ENCODE measurements at regions of chr5 and their contacts with region 1.

Region 1: GRCh38 chr5:35822511-35822910 is 34.2 kb upstream of the IL7R start:
- DNase-seq: peak; percentile 82
- ATAC-seq: peak; percentile 28
- H3K4me3 Mint-ChIP-seq: peak overlapping the region; percentile 55
- H3K27ac Mint-ChIP-seq: peak overlapping the region; percentile 92
- H3K4me1 Mint-ChIP-seq: peaks cover 87% of the 10 kb centered on the region
- H3K27me3 Mint-ChIP-seq: no peaks in the 10 kb centered on the region
- CTCF ChIP-seq: no peak

Region 2: DNA sequence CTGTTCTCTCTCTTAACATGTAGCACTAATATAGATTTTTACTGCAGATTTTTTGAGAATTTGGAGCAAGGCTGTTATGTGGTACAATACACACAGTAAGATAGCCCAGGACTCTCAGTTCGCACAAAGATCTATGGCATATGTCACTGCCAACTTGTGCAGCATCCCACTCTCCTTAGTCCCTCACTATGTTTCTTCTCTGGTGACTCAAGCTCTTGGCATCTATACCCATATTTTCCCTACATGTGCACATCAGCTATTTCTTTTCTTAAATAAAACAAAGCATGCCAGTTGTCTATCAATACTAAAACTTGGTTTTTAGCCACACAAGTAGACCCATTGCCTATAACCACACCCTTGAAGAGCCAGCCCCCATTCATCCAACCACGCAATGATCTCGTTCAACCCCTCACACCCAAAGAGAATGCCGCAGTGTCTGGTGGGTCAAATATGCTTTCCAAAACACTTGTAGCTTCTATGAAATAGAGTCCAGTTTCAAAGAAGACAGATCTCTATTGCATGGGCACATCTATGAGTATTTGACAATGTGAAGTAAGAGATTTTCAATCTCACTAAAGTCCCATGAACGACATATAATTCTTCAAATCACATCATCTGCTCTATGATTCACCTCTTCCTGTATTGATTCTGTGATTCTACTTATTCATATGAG is 16.0 kb after region 1 on chr5:
- CTCF ChIA-PET with region 1: interaction called, 13 read pairs
- POLR2A ChIA-PET with region 1: interaction called, 33 read pairs
- intact Hi-C with region 1: no loop called
- DNase-seq: peak; percentile 78
- ATAC-seq: peak; percentile 75
- H3K4me3 Mint-ChIP-seq: peak overlapping the region; percentile 37
- H3K27ac Mint-ChIP-seq: peak overlapping the region; percentile 91
- H3K4me1 Mint-ChIP-seq: peaks cover 72% of the 10 kb centered on the region
- H3K27me3 Mint-ChIP-seq: no peaks in the 10 kb centered on the region
- CTCF ChIP-seq: no peak